ENCODE measurements at regions of chr12 and their contacts with region 1.

Region 1: GRCh38 chr12:7108796-7109571 is at the start of gene C1RL:
- DNase-seq: peak; percentile 87
- H3K4me3 Mint-ChIP-seq: peak within 1 kb of the TSS; percentile 97
- H3K27ac Mint-ChIP-seq: peak within 1 kb of the TSS; percentile 95
- H3K4me1 Mint-ChIP-seq: peaks cover 68% of the 10 kb centered on the region
- H3K27me3 Mint-ChIP-seq: no peaks in the 10 kb centered on the region

Region 2: DNA sequence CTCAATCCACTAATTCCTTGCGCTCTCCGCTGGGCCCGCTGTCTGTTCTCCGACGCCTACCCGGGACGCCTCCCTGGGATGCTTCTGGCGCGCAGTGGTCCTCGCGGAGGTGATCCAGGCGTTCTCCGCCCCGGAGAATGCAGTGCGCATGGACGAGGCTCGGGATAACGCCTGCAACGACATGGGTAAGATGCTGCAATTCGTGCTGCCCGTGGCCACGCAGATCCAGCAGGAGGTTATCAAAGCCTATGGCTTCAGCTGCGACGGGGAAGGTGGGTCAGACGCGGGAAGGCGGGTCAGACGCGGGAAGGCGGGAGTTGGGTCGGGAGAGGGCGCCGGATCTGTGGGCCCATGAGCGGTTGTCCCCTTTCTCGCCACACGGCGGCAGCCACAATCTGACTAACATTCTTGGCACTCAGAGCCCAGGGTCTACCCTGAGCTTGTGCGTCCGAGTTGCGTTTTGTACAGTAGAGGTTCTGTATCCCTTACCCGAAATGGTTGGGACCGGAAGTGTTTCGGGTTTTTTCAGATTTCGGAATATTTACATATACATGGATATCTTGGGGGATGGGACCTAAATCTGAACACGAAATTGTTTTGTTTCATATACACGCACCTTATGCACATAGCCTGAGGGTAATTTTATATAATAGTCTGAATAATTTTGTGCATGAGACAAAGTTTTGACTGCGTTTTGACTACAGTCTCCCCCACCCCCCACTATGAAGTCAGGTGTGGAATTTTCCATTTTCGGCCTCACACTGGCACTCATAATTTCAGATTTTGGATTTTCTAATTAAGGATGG is 164.4 kb before region 1 on chr12:
- CTCF ChIA-PET with region 1: interaction called, 51 read pairs
- DNase-seq: peak; percentile 93
- H3K4me3 Mint-ChIP-seq: peak overlapping the region; percentile 84
- H3K27ac Mint-ChIP-seq: peak overlapping the region; percentile 96
- H3K4me1 Mint-ChIP-seq: peaks cover 67% of the 10 kb centered on the region
- H3K27me3 Mint-ChIP-seq: no peaks in the 10 kb centered on the region

Region 3: DNA sequence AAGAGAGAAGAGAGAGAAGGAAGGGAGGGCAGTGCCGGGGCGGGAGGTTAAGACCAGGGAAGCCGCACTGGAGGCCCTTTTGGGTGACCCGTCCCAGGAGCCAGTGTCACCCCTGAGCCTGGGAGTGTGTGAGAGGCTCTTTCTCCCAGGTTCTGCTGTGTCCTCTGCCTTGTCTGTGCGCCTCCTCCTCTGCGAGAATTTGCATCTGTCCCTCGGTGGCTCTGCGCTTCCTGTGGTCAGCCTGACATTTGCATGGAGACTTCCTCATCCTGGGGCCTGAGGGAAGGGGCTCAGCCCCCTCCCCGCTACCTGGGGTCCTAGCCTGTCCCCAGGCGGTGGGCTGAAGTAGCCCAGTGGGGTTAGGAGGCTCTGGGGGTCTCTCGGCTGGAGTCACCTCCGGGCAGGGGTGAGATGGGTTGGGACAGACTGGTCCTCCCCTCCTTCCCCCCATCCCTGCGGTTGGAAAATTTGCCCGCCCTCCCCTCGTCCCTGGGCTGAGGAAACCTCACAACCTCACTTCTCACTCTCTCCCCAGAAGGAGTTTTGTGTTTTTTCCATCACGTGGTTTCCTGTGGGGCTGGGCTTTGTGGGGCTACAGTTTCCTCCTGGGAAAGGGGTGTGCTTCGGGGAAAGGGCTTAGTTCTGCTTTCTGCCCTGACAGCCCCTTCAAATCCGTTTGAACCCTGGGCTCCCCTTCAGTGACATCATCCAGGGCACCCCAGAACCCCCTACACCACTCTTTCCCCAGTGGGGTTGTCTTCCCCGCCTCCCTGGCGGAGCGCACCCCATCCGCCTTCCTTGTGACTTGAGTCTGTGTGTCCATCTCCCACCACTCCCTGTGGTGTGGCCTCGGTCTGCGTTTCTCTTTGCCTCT is 155.3 kb before region 1 on chr12:
- CTCF ChIA-PET with region 1: interaction called, 13 read pairs
- DNase-seq: peak; percentile 87
- H3K4me3 Mint-ChIP-seq: peak overlapping the region; percentile 100
- H3K27ac Mint-ChIP-seq: peak overlapping the region; percentile 96
- H3K4me1 Mint-ChIP-seq: peaks cover 73% of the 10 kb centered on the region
- H3K27me3 Mint-ChIP-seq: peaks cover 3% of the 10 kb centered on the region

Region 4: GRCh38 chr12:7018350-7019042 is 90.5 kb before region 1 on chr12 and contains the start of gene LPCAT3:
- CTCF ChIA-PET with region 1: interaction called, 13 read pairs
- DNase-seq: peak; percentile 98
- H3K4me3 Mint-ChIP-seq: peak within 1 kb of the TSS; percentile 86
- H3K27ac Mint-ChIP-seq: peak within 1 kb of the TSS; percentile 87
- H3K4me1 Mint-ChIP-seq: peaks cover 34% of the 10 kb centered on the region
- H3K27me3 Mint-ChIP-seq: peaks cover 4% of the 10 kb centered on the region

Region 5: DNA sequence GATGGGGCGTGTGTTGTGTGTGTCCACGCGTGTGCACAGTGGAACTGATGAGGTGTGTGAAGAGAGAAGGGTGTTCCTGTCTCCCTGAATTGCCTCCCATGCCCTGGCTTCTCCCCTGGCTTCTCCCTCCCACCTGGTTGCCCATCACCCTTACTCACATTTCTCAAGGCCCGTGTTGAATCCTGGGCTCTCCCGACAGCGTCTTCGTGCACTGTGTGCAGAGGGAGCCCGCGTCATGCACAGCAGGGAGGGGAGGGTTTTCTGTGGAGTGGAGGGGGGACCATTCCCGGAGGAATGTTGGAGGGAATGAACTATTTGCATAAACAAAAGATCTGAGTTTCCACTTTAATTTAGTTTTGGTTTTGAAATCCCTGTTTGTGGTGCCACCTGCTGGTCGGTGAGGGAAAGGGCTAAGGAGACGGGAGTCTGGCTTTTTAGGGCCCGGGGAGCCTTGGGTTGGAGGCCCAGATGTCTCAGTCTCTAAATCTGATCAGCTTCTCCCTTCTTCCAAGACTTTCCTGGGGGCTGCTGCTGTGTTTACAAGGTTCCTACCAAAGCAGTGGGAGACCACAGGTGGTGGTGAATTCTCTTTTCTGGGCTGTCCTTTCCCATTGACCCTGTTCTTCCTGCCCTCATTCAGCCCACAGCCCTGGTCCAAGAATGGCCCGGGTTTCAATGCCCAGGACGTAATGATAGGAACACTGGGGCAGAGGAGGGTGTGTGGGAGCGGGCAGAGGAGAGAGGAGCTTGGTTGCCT is 16.6 kb before region 1 on chr12 and contains the start of gene C1R:
- CTCF ChIA-PET with region 1: interaction called, 15 read pairs
- DNase-seq: peak; percentile 82
- H3K4me3 Mint-ChIP-seq: peak within 1 kb of the TSS; percentile 71
- H3K27ac Mint-ChIP-seq: peak within 1 kb of the TSS; percentile 63
- H3K4me1 Mint-ChIP-seq: peaks cover 13% of the 10 kb centered on the region
- H3K27me3 Mint-ChIP-seq: peaks cover 19% of the 10 kb centered on the region

Region 6: DNA sequence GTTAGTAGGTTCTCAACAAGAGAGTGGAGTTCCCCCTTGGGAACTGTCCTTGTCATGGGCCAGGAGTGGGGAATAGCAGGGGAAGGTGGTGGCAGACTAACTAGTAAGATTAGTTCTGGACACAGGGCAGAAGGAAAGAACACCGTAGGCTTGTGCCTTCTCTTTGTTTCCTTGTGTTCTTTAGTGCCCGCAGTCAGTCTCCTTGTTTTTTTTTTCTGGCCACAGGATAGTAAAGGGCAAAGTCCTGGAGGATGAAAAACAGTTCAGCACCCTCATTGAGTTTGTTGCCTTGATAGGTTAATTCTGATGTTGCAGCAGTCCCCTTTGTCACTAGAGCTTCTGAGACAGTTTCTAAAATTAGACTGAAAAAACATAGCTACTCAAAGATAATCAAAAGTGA is 88.9 kb after region 1 on chr12:
- CTCF ChIA-PET with region 1: no interaction called
- DNase-seq: no peak
- H3K4me3 Mint-ChIP-seq: no peak overlapping the region
- H3K27ac Mint-ChIP-seq: no peak overlapping the region
- H3K4me1 Mint-ChIP-seq: peaks cover under 1% of the 10 kb centered on the region
- H3K27me3 Mint-ChIP-seq: no peaks in the 10 kb centered on the region

Region 7: GRCh38 chr12:7439579-7440505 is 330.9 kb after region 1 on chr12:
- CTCF ChIA-PET with region 1: no interaction called
- DNase-seq: peak; percentile 40
- H3K4me3 Mint-ChIP-seq: peak overlapping the region; percentile 39
- H3K27ac Mint-ChIP-seq: no peak overlapping the region
- H3K4me1 Mint-ChIP-seq: peaks cover 7% of the 10 kb centered on the region
- H3K27me3 Mint-ChIP-seq: peaks cover 40% of the 10 kb centered on the region

Measured in activated naive CD4-positive, alpha-beta T cell treated with anti-CD3 and anti-CD28 coated beads, Interleukin-2, amount 10 ng/mL, durations not matched to agents 7 days and 5 days (primary cell).